Breast epithelium (tissue), 4 donors: ENCODE measurements at regions of chr9 and their contacts with region 1.

Region 1: GRCh38 chr9:89576404-89576839 is 28.4 kb upstream of the GADD45G start:
- DNase-seq: no peak
- H3K4me3 ChIP-seq: no peak overlapping the region
- H3K27ac ChIP-seq: no peak overlapping the region
- H3K4me1 ChIP-seq: no peaks in the 10 kb centered on the region
- H3K27me3 ChIP-seq: peaks cover 0 to 15% of the 10 kb centered on the region in 2 donors
- CTCF ChIP-seq: peak in 2 of 3 donors; percentile 49 to 65
- POLR2A ChIP-seq: no peak

Region 2: DNA sequence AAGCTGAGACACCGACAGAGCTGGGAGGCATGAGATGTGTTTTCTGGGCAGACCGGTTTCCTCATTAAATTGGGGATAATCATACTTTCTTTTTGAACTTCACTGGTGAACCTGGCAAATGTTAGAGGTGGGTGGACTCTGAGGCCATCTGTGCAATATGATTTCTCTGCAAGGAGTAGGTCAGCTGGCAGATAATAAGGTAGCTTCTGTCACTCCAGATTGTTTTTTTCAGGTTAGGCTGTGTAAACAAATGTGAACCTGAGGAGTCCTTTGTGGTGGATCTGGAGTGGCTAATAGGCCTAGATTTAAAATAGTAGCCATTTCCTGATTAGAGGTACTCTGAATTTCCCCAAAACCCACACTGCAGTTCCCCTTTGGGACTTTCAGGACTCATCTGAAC is 660.5 kb before region 1 on chr9:
- intact Hi-C with region 1: no loop called
- DNase-seq: no peak
- H3K4me3 ChIP-seq: no peak overlapping the region
- H3K27ac ChIP-seq: peak overlapping the region; percentile 5 to 58
- H3K4me1 ChIP-seq: no peaks in the 10 kb centered on the region
- H3K27me3 ChIP-seq: no peaks in the 10 kb centered on the region
- CTCF ChIP-seq: no peak
- POLR2A ChIP-seq: no peak

Region 3: GRCh38 chr9:90741036-90741435 is 1164.6 kb after region 1 on chr9:
- intact Hi-C with region 1: loop called (anchors 10 kb)
- DNase-seq: no peak
- H3K4me3 ChIP-seq: no peak overlapping the region
- H3K27ac ChIP-seq: no peak overlapping the region
- H3K4me1 ChIP-seq: no peaks in the 10 kb centered on the region
- H3K27me3 ChIP-seq: no peaks in the 10 kb centered on the region
- CTCF ChIP-seq: no peak
- POLR2A ChIP-seq: no peak